IMR-90 (cell line): ENCODE measurements at regions of chr7 and their contacts with region 1.

Region 1: DNA sequence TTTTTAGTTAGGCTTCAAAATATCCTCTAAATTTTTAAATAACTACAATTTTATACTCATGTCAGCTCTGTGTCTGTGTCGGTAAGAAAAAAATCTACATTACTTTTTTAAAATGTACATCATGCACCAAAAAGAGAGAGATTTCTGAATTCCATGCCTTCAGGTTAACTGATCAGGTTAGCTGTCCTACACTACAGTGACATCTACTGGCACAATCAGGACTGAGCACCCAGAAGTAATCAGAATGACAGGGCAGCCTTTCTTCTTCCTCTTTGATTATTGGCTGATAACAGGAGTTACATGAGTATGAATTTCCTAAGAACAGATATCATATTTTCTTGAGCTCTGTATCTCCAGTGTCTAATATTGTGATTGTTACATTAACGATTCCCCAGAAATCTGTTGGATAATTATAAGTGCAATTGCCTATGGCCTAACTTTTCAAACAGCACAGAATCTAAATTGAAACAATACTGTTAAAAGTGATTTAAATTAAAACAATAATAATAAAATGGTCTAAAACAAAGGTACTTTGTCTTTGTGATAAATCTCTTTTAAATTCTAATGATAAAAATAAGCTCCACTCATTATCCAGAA is 41.8 kb upstream of the HYCC1 start:
- DNase-seq: peak; percentile 77
- ATAC-seq: peak; percentile 94
- H3K4me3 ChIP-seq: no peak overlapping the region
- H3K27ac ChIP-seq: no peak overlapping the region
- H3K4me1 ChIP-seq: no peaks in the 10 kb centered on the region
- H3K27me3 ChIP-seq: no peaks in the 10 kb centered on the region
- CTCF ChIP-seq: peak; percentile 94
- POLR2A ChIP-seq: peak; percentile 45; the same call in 1 of the 2 replicates
- RAD21 ChIP-seq: peak; percentile 98

Region 2: DNA sequence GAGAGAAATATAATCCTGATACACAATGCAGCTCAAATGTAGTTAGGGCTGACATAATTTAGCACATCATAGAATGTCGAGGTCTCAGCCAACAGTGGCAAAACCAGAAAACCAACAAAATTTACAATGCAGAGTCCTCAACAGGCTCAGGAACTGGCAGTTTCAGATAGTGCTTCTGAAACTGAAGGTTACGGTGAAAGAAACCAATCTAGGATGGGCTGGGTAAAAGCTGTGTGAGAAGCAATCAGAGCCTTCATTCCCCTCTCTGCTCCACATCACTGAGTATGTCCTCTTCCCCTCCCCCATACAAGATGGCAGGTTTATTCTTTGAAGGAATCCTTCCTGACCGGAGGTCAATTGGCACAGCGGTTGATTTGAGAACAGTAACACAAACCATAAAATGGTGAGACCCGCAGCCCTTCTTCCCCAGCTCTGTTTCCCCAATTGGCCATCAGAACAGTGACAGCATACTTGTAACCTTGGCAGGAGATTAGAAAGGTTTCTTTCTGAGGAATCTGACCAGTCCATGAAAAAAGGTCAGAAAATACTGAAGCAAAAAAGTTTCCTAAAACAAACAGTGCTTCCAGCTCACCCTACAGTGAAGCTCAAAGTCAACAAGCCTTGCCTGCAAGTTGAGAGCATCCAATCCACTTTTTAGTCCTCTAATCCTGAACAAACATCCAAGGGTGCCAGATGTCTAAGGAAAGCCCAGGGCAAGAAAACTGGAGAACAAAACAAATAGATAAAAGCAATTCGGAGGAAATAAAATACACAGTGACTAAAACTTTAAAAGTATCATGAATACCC is 382.6 kb before region 1 on chr7:
- CTCF ChIA-PET with region 1: no interaction called
- POLR2A ChIA-PET with region 1: no interaction called
- dilution Hi-C with region 1: no loop called
- in situ Hi-C with region 1: no loop called
- intact Hi-C with region 1: loop called (anchors 5 kb)
- DNase-seq: peak; percentile 46
- ATAC-seq: peak; percentile 22
- H3K4me3 ChIP-seq: no peak overlapping the region
- H3K27ac ChIP-seq: peak overlapping the region; percentile 28; the same call in 1 of the 2 replicates
- H3K4me1 ChIP-seq: peaks cover 26% of the 10 kb centered on the region
- H3K27me3 ChIP-seq: no peaks in the 10 kb centered on the region
- CTCF ChIP-seq: no peak
- POLR2A ChIP-seq: no peak
- RAD21 ChIP-seq: no peak

Region 3: GRCh38 chr7:22822486-22823141 is 233.1 kb before region 1 on chr7 and contains the start of gene TOMM7:
- CTCF ChIA-PET with region 1: interaction called, 4 read pairs
- POLR2A ChIA-PET with region 1: no interaction called
- dilution Hi-C with region 1: no loop called
- in situ Hi-C with region 1: no loop called
- intact Hi-C with region 1: loop called (anchors 5 kb)
- DNase-seq: peak; percentile 97
- ATAC-seq: peak; percentile 93
- H3K4me3 ChIP-seq: peak within 1 kb of the TSS; percentile 82
- H3K27ac ChIP-seq: peak within 1 kb of the TSS; percentile 88
- H3K4me1 ChIP-seq: peaks cover 5% of the 10 kb centered on the region
- H3K27me3 ChIP-seq: no peaks in the 10 kb centered on the region
- CTCF ChIP-seq: peak; percentile 53
- POLR2A ChIP-seq: peak; percentile 86
- RAD21 ChIP-seq: peak; percentile 52
- total RNA-seq, gene TOMM7: 67.2 and 125 TPM in 2 replicates

Region 4: DNA sequence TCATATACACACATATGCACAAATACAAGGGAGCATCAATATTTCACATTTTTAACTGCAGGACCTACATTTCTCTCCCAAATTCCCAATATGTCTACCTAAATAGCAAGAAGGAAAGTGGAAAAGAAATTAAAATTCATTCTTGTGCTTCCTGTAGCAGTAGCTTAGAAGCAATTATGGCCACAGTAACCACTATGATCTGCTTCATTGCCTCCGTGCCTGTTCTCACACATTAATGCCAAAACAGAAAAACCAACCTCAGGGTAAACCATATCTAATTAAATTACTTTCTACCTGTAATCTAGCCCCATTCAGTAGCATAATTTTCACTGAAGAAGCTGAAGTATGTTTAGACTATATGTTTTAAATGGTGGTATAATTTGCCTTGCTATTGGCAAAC is 96.9 kb before region 1 on chr7:
- CTCF ChIA-PET with region 1: no interaction called
- POLR2A ChIA-PET with region 1: no interaction called
- dilution Hi-C with region 1: no loop called
- in situ Hi-C with region 1: no loop called
- intact Hi-C with region 1: loop called (anchors 5 kb)
- DNase-seq: no peak
- ATAC-seq: no peak
- H3K4me3 ChIP-seq: no peak overlapping the region
- H3K27ac ChIP-seq: no peak overlapping the region
- H3K4me1 ChIP-seq: no peaks in the 10 kb centered on the region; the same call in 1 of the 2 replicates
- H3K27me3 ChIP-seq: no peaks in the 10 kb centered on the region
- CTCF ChIP-seq: no peak
- POLR2A ChIP-seq: no peak
- RAD21 ChIP-seq: no peak

Region 5: DNA sequence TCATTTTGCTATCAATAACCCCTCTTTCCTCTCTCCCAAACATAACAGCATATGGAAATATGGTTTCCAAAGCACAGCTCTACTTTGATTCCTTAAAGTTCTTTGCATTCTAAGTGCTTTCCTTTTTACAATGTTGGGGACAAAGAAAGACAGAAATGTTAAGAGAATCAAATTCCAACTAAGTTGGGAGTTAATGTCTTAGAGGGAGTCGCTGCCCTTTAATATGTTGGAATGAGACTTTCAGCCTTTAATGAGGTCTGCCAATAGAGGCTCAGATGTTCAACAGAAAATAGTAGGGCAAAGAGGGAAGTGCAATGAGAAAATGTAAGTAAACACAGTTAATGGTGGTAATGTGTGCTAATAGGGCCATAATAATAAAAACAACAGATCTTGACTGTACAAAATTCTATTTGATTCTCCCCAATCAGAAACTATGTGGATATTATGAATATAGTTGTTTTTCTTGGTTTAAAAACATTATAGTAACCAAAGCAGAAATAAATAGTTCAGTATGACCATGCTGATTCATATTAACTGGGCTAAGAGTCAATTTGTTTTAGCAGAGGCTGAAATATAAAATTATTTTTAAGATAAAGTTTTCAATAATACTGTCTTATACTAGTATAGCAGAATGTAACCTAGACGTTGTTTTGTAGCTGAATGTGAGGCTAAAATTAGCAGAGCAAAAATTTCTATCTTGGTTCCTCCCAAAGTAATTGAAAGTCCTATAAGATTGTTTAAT is 52.0 kb before region 1 on chr7:
- CTCF ChIA-PET with region 1: no interaction called
- POLR2A ChIA-PET with region 1: no interaction called
- dilution Hi-C with region 1: no loop called
- in situ Hi-C with region 1: no loop called
- intact Hi-C with region 1: no loop called
- DNase-seq: peak; percentile 15
- ATAC-seq: peak; percentile 58
- H3K4me3 ChIP-seq: no peak overlapping the region
- H3K27ac ChIP-seq: peak overlapping the region; percentile 23; the same call in 1 of the 2 replicates
- H3K4me1 ChIP-seq: peaks cover 11% of the 10 kb centered on the region
- H3K27me3 ChIP-seq: no peaks in the 10 kb centered on the region
- CTCF ChIP-seq: no peak
- POLR2A ChIP-seq: no peak
- RAD21 ChIP-seq: no peak